CD4-positive, alpha-beta memory T cell (primary cell): ENCODE measurements at regions of chr12 and their contacts with region 1.

Region 1: DNA sequence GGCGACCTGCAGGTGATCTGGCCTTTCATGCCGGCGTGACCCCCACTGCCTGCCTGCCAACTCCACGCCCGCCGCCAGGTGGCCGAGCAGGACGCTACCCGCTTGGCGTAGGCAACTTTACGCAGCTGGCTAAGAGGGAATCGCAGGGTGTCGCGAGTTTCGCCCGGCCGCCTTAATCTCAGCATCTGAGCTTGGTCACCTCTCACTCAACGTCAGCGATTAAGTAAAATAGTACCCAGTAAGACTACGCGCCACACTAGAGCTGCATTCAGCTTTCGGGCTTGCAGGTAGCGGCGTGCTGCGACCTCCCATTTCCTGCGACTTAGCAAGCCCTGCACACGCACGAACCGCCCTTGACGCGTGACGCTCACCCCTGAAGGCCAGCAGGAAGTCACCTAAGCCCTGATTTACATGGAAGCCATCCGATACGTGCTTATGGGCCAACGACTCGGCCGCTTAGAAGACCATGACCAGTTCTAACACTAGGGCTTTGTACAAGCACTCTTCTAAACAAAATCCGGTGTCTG is 33.2 kb downstream of the WBP11 start:
- DNase-seq: peak; percentile 87 to 94 (median 90)
- H3K4me3 ChIP-seq: peak overlapping the region; percentile 88 to 92
- H3K4me3 Mint-ChIP-seq: peak overlapping the region; percentile 94 to 99 (median 97)
- H3K27ac ChIP-seq: peak overlapping the region; percentile 98
- H3K27ac Mint-ChIP-seq: peak overlapping the region; percentile 97 to 100 (median 99)
- H3K4me1 ChIP-seq: peaks cover 50% of the 10 kb centered on the region
- H3K4me1 Mint-ChIP-seq: peaks cover 30 to 83% (median 50%) of the 10 kb centered on the region in 4 donors
- H3K27me3 ChIP-seq: no peaks in the 10 kb centered on the region
- H3K27me3 Mint-ChIP-seq: no peaks in the 10 kb centered on the region

Region 2: GRCh38 chr12:14239350-14239934 is 530.6 kb before region 1 on chr12:
- CTCF ChIA-PET with region 1: no interaction called
- POLR2A ChIA-PET with region 1: interaction called, 17 read pairs
- intact Hi-C with region 1: loop called (anchors 5 kb)
- DNase-seq: peak in 2 of 5 donors; percentile 17 to 50
- H3K4me3 ChIP-seq: peak overlapping the region in 1 of 2 donors; percentile 28
- H3K4me3 Mint-ChIP-seq: peak overlapping the region; percentile 73 to 91 (median 87)
- H3K27ac ChIP-seq: peak overlapping the region; percentile 25
- H3K27ac Mint-ChIP-seq: peak overlapping the region; percentile 44 to 93 (median 90)
- H3K4me1 ChIP-seq: peaks cover 19% of the 10 kb centered on the region
- H3K4me1 Mint-ChIP-seq: peaks cover 13 to 22% (median 18%) of the 10 kb centered on the region in 4 donors
- H3K27me3 ChIP-seq: no peaks in the 10 kb centered on the region
- H3K27me3 Mint-ChIP-seq: no peaks in the 10 kb centered on the region

Region 3: DNA sequence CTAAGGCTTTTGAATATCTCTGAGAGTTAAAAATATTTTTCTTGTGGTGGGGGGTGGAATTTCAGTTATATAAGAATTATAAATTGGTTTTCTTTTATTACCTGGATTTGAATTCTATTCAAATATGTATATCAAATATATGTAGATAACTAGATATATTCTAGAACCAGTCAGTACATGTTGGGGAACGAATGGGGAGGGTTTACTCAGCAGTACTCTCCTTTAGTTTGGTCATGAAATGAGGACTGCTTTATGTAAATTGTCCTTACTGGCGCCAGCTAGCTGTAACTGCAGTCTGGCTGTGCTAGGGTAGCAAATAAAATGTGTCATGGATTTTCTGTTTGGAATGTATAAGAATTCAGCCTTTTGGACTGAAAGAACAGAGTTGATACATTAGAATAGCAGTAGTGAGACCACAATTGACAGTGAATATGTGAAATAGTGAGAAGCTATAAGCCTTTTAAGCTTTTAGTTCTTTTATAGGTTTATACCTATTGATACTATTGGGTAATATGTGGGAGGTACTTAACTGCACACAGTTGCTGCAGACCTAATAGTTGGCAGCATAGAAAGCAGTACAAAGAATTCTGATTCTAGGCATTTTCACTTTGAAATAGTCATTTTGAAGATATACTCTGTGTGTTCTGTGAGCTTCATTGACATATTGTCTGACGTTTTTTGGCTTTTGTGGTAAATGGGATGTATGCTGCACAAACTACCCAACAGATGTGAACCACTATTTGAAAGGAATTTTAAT is 375.5 kb before region 1 on chr12:
- CTCF ChIA-PET with region 1: no interaction called
- POLR2A ChIA-PET with region 1: interaction called, 10 read pairs
- intact Hi-C with region 1: loop called (anchors 5 kb)
- DNase-seq: peak; percentile 74 to 84 (median 75)
- H3K4me3 ChIP-seq: peak overlapping the region in 1 of 2 donors; percentile 25
- H3K4me3 Mint-ChIP-seq: peak overlapping the region; percentile 78 to 89 (median 83)
- H3K27ac ChIP-seq: peak overlapping the region; percentile 73
- H3K27ac Mint-ChIP-seq: peak overlapping the region; percentile 93 to 98 (median 97)
- H3K4me1 ChIP-seq: peaks cover 98% of the 10 kb centered on the region
- H3K4me1 Mint-ChIP-seq: peaks cover 55 to 94% (median 75%) of the 10 kb centered on the region in 4 donors
- H3K27me3 ChIP-seq: no peaks in the 10 kb centered on the region
- H3K27me3 Mint-ChIP-seq: no peaks in the 10 kb centered on the region

Region 4: GRCh38 chr12:14803011-14803829 is 33.2 kb after region 1 on chr12 and contains the starts of genes C12orf60 and WBP11:
- CTCF ChIA-PET with region 1: interaction called, 27 read pairs
- POLR2A ChIA-PET with region 1: interaction called, 376 read pairs
- intact Hi-C with region 1: loop called (anchors 1 kb)
- DNase-seq: peak; percentile 89 to 96 (median 94)
- H3K4me3 ChIP-seq: peak within 1 kb of the TSS; percentile 66 to 89
- H3K4me3 Mint-ChIP-seq: no peak within 1 kb of the TSS
- H3K27ac ChIP-seq: peak within 1 kb of the TSS; percentile 91
- H3K27ac Mint-ChIP-seq: no peak within 1 kb of the TSS
- H3K4me1 ChIP-seq: peaks cover 39% of the 10 kb centered on the region
- H3K4me1 Mint-ChIP-seq: peaks cover 4 to 32% (median 13%) of the 10 kb centered on the region in 4 donors
- H3K27me3 ChIP-seq: no peaks in the 10 kb centered on the region
- H3K27me3 Mint-ChIP-seq: no peaks in the 10 kb centered on the region
- total RNA-seq, gene C12orf60: 1.3 to 1.4 TPM
- total RNA-seq, gene WBP11: 83.7 to 83.8 TPM

Region 5: DNA sequence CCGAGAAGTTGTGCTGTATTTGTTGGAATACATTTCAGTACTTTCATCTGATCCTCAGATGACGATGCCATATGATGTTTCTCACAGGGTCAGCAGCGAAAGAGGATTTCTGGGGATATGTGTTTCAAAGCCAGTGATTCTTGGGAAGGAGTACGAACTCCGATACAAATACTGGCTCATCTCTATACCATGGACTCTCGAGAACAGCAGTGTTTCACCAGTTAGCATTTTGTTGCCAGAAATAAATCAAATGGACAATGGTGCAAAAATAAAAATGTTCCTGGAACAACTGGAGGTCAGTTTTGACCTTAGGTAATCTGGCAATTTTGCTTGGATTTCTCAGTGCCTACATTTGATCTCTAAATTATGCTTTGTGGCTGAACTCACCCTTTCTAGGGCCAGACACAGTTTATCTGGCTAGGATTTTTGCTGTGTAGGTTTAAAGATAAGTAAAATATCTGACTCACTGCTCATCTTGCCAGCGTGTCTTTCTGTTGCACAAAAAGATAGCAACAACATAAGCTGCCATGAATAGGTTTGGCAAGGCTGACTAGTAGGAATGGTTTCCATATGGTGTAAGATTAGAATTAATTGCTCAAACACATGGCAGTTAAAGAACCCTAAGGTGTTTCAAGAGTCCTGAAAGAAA is 126.6 kb after region 1 on chr12:
- CTCF ChIA-PET with region 1: no interaction called
- POLR2A ChIA-PET with region 1: no interaction called
- intact Hi-C with region 1: no loop called
- DNase-seq: no peak
- H3K4me3 ChIP-seq: no peak overlapping the region
- H3K4me3 Mint-ChIP-seq: no peak overlapping the region
- H3K27ac ChIP-seq: no peak overlapping the region
- H3K27ac Mint-ChIP-seq: no peak overlapping the region
- H3K4me1 ChIP-seq: no peaks in the 10 kb centered on the region
- H3K4me1 Mint-ChIP-seq: no peaks in the 10 kb centered on the region
- H3K27me3 ChIP-seq: no peaks in the 10 kb centered on the region
- H3K27me3 Mint-ChIP-seq: no peaks in the 10 kb centered on the region

Region 6: GRCh38 chr12:14954269-14954668 is 184.2 kb after region 1 on chr12:
- CTCF ChIA-PET with region 1: interaction called, 3 read pairs
- POLR2A ChIA-PET with region 1: interaction called, 224 read pairs
- intact Hi-C with region 1: loop called (anchors 1 kb)
- DNase-seq: peak in 1 of 5 donors; percentile 59
- H3K4me3 ChIP-seq: peak overlapping the region; percentile 30 to 51
- H3K4me3 Mint-ChIP-seq: peak overlapping the region; percentile 79 to 94 (median 88)
- H3K27ac ChIP-seq: peak overlapping the region; percentile 92
- H3K27ac Mint-ChIP-seq: peak overlapping the region; percentile 94 to 100 (median 99)
- H3K4me1 ChIP-seq: peaks cover 88% of the 10 kb centered on the region
- H3K4me1 Mint-ChIP-seq: peaks cover 58 to 97% (median 71%) of the 10 kb centered on the region in 4 donors
- H3K27me3 ChIP-seq: no peaks in the 10 kb centered on the region
- H3K27me3 Mint-ChIP-seq: no peaks in the 10 kb centered on the region

Region 7: DNA sequence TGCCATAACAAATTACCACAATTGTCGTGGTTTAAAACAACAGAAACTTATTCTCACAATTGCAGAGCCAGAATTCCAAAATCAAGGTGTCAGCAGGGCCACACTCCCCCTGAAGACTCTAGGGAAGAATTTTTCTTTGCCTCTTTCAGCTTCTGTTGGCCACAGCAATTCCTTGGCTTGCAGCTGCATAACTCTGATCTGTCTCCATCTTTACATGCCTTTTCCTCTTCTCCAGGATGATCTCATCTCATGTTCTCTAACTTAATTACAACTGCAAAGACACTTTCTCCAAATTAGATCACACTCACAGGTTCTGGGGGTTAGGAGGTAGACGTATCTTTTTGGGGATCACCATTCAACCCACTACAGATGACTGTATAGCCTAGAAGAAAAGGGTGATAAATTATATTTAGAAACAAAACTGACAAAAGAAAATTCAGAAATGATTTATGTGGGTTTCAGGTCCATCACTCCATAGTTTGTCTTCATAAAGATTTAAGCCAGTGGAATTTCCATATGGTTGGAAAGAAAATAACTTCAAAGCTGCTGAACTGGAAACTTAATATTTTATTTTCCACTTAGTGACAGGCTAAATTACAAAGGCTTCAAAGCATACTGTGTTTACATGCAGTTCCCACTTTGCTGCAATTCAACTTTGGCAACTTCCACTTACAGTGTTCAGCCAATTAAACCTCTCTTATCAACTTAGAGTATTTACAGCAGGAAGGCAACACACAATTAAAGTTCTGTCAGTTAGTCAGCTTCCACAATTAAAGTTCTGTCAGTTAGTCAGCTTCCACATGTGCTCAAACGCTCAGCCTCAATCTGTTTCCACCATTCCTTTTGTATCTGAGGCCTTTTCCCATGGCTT is 805.9 kb after region 1 on chr12:
- CTCF ChIA-PET with region 1: no interaction called
- POLR2A ChIA-PET with region 1: interaction called, 11 read pairs
- intact Hi-C with region 1: no loop called
- DNase-seq: no peak
- H3K4me3 ChIP-seq: no peak overlapping the region
- H3K4me3 Mint-ChIP-seq: peak overlapping the region in 2 of 8 donors; percentile 2 to 27
- H3K27ac ChIP-seq: no peak overlapping the region
- H3K27ac Mint-ChIP-seq: peak overlapping the region in 1 of 7 donors; percentile 30
- H3K4me1 ChIP-seq: peaks cover 9% of the 10 kb centered on the region
- H3K4me1 Mint-ChIP-seq: peaks cover 7 to 14% (median 12%) of the 10 kb centered on the region in 4 donors
- H3K27me3 ChIP-seq: no peaks in the 10 kb centered on the region
- H3K27me3 Mint-ChIP-seq: no peaks in the 10 kb centered on the region